ENCODE measurements at regions of chr9 and their contacts with region 1.

Region 1: GRCh38 chr9:130866474-130866965 is 30.1 kb downstream of the QRFP start:
- DNase-seq: no peak
- ATAC-seq: peak; percentile 90
- H3K4me3 ChIP-seq: no peak overlapping the region
- H3K27ac ChIP-seq: no peak overlapping the region
- H3K4me1 ChIP-seq: peaks cover 11% of the 10 kb centered on the region
- H3K27me3 ChIP-seq: no peaks in the 10 kb centered on the region
- CTCF ChIP-seq: peak; percentile 74

Region 2: GRCh38 chr9:130640681-130641080 is 225.8 kb before region 1 on chr9:
- intact Hi-C with region 1: no loop called
- DNase-seq: no peak
- ATAC-seq: no peak
- H3K4me3 ChIP-seq: no peak overlapping the region
- H3K27ac ChIP-seq: no peak overlapping the region
- H3K4me1 ChIP-seq: no peaks in the 10 kb centered on the region
- H3K27me3 ChIP-seq: no peaks in the 10 kb centered on the region
- CTCF ChIP-seq: no peak

Region 3: DNA sequence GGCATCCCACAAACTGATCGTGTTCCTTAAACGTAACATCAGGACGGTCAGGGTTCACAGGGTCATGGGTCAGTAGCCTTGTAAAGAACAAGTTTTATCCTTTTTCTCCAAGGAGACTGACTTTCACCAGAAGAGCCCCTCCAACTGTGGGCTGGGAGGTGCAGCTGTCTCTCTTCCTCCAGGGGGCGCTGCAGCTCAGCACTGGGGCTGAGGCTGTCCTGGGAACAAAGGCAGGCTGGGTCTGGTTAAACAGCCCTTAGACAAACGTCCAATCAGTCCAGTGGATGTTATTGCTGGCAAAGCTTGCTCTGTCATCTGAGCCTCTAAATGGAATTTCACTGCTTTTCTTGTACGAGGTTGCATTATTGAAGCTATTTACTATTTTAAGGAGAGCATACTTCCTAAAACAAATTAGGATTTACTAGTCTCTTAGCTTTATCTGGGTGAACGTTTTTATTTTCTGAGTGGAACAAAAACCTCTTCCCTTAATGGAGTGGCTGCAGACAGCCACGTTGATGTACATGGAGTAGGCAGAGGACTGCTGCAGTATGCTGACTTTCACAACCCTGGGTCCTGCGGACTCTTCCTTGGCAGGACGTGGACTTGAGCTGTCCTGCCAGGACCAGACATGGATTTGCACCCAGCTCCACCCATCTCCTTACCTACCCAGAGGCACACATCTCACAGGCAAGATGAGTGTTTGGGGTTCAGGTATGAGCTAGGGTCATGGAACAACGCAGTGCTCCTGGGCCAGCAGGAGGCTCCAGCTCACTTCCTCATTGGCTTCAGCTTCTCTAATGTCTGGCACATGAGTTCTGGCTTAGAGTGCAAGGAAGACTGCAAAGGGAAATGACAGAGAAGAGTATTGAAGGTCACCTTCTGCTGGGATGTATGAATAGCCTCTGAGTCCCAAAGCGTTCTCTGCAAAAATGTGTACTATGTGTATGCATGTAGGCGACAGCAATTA is 165.2 kb before region 1 on chr9:
- intact Hi-C with region 1: loop called (anchors 5 kb)
- DNase-seq: peak; percentile 82
- ATAC-seq: peak; percentile 94
- H3K4me3 ChIP-seq: no peak overlapping the region
- H3K27ac ChIP-seq: no peak overlapping the region
- H3K4me1 ChIP-seq: peaks cover 6% of the 10 kb centered on the region
- H3K27me3 ChIP-seq: no peaks in the 10 kb centered on the region
- CTCF ChIP-seq: peak; percentile 90

Region 4: GRCh38 chr9:130768265-130768664 is 98.3 kb before region 1 on chr9:
- intact Hi-C with region 1: loop called (anchors 10 kb)
- DNase-seq: no peak
- ATAC-seq: peak; percentile 64
- H3K4me3 ChIP-seq: no peak overlapping the region
- H3K27ac ChIP-seq: no peak overlapping the region
- H3K4me1 ChIP-seq: peaks cover 22% of the 10 kb centered on the region
- H3K27me3 ChIP-seq: no peaks in the 10 kb centered on the region
- CTCF ChIP-seq: no peak